Psoas muscle (tissue), 8 donors: ENCODE measurements at regions of chr3 and their contacts with region 1.

Region 1: DNA sequence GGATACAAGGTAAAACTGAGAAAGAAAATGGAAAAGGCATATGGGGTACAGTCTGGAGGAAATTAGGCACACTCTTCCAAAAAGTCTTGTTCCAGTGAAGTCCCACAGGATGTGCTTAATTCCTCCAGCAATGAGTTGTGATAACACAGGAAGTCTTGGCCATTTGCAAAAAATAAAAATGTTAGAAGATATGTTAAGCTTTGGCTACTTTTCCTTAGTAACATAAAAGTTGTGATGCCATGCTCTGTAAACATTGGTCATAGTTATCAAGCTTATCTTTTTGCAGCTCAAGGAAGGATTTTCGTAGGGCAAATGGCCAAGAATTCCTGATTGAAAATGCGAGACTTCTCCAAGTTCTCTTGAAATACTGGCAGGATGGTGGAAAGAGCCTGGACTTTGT is 26.4 kb downstream of the LNP1 start:
- DNase-seq: no peak
- ATAC-seq: no peak
- H3K4me3 ChIP-seq: no peak overlapping the region
- H3K27ac ChIP-seq: no peak overlapping the region
- H3K4me1 ChIP-seq: no peaks in the 10 kb centered on the region
- H3K27me3 ChIP-seq: no peaks in the 10 kb centered on the region
- CTCF ChIP-seq: no peak

Region 2: DNA sequence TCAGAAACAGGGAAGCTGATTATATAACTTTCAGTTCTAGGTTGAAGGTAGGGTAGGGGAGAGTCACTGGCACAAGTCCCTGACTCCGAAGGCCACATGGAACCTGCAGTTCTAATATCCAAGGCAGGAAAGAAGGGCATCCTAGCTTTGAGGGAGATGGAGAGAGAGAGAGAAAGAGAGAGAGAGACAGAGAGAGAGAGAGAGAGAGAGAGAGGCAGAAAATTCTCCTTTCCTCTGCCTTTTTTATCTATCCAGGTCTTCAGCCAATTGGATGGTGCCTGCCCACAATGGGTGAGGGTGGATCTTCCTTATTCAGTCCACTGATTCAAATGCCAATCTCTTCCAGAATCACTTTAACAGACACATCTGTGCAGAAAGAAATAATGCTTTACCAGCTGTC is 29.0 kb after region 1 on chr3:
- intact Hi-C with region 1: loop called in 1 of 2 experiments (anchors 1 kb)
- DNase-seq: no peak
- ATAC-seq: no peak
- H3K4me3 ChIP-seq: no peak overlapping the region
- H3K27ac ChIP-seq: no peak overlapping the region
- H3K4me1 ChIP-seq: no peaks in the 10 kb centered on the region
- H3K27me3 ChIP-seq: no peaks in the 10 kb centered on the region
- CTCF ChIP-seq: no peak